CD8-positive, alpha-beta T cell (primary cell): ENCODE measurements at regions of chr9 and their contacts with region 1.

Region 1: DNA sequence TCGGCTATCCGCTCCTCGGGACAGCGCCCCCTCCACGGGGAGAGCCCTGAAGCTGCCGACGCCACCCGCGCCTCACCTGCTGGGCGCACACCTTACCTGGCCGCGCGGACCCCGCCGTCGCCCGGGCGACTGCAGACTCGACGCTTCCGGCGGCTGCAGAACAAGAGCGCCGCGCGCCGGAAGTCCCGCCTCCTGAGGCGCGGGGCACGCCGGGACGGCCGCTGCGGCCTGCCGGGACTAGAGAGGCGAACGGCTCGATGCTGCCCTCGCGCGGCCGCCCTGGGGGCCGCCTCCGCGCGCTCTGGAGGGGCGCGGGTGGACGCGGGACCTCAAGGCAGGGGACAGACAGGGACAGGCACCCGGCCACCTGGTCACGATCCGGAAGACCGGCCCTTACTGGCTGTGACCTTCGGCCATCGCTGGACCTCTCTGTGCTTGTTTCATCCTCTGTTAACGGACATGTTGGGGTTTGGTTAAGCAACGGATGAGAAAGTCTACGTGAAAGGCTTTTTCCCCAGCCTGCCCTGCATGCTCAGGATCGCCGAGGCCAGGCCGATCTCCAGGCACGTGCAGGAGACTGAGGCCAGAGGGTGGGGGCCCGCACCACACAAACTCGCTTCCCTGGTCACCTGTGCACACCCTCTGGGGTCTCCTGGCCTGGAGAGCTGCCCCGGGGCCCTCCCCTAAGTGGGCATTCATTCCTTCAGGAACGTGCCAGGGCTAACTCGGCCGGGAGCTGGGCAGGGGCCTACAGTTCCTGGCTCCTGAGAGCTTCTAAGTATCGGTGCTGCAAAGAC is at the start of gene SNAPC4:
- DNase-seq: peak; percentile 69 to 94 (median 86)
- ATAC-seq: peak; percentile 70
- H3K4me3 ChIP-seq: peak within 1 kb of the TSS; percentile 60 to 66
- H3K4me3 Mint-ChIP-seq: peak within 1 kb of the TSS; percentile 85
- H3K27ac ChIP-seq: peak within 1 kb of the TSS in 1 of 2 experiments; percentile 47
- H3K27ac Mint-ChIP-seq: peak within 1 kb of the TSS; percentile 67
- H3K4me1 ChIP-seq: peaks cover 49% of the 10 kb centered on the region
- H3K4me1 Mint-ChIP-seq: peaks cover 40% of the 10 kb centered on the region
- H3K27me3 ChIP-seq: no peaks in the 10 kb centered on the region
- H3K27me3 Mint-ChIP-seq: no peaks in the 10 kb centered on the region
- CTCF ChIP-seq: peak; percentile 93
- total RNA-seq, gene SNAPC4: 6.7 TPM

Region 2: GRCh38 chr9:136312436-136312835 is 87.8 kb before region 1 on chr9:
- CTCF ChIA-PET with region 1: no interaction called
- POLR2A ChIA-PET with region 1: no interaction called
- intact Hi-C with region 1: loop called in 1 of 2 experiments (anchors 1 kb)
- DNase-seq: peak in 8 of 9 experiments; percentile 7 to 65 (median 40)
- ATAC-seq: peak; percentile 50
- H3K4me3 ChIP-seq: no peak overlapping the region
- H3K4me3 Mint-ChIP-seq: no peak overlapping the region
- H3K27ac ChIP-seq: no peak overlapping the region
- H3K27ac Mint-ChIP-seq: no peak overlapping the region
- H3K4me1 ChIP-seq: no peaks in the 10 kb centered on the region
- H3K4me1 Mint-ChIP-seq: peaks cover 4% of the 10 kb centered on the region
- H3K27me3 ChIP-seq: peaks cover 7 to 31% of the 10 kb centered on the region in 2 experiments
- H3K27me3 Mint-ChIP-seq: no peaks in the 10 kb centered on the region
- CTCF ChIP-seq: peak; percentile 40

Region 3: DNA sequence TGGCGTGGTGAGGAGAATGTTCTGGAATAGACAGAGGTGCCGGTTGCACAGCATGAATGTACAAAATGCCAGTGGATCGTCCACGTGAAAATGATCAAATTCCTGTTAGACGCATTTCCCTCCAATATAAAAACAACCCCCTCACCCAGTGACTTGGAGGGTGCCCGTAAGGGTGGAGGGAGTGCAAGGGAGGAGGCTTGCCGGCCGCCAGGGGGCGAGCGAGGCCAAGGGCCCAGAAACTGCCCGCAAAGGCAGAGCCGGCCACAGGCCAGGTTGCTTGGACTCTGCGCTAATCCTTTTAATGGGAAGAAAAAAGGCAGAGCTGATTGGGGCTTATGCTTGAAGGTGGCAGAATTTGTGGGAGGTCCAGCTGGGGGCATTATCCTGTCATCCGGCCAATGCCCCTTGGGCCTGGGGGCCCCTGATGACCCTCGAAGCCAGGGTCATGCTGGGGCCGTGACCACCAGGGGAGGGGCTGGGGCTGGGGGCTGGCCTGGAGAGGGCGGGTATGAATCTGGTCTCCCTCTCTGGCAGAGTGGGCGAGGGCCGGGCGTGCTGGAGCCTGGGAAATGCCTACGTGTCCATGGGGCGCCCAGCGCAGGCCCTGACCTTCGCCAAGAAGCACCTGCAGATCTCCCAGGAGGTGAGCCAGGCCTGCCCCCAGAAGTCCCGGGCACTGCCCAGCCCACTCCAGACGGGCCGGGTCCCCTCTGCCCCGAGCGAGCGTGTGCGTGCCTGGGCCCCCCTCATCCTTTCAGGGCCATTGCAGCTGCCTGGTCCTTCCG is 60.9 kb before region 1 on chr9:
- CTCF ChIA-PET with region 1: interaction called, 3 read pairs
- POLR2A ChIA-PET with region 1: no interaction called
- intact Hi-C with region 1: loop called in 1 of 2 experiments (anchors 2 kb)
- DNase-seq: peak in 5 of 9 experiments; percentile 28 to 61 (median 49)
- ATAC-seq: no peak
- H3K4me3 ChIP-seq: no peak overlapping the region
- H3K4me3 Mint-ChIP-seq: no peak overlapping the region
- H3K27ac ChIP-seq: no peak overlapping the region
- H3K27ac Mint-ChIP-seq: no peak overlapping the region
- H3K4me1 ChIP-seq: no peaks in the 10 kb centered on the region
- H3K4me1 Mint-ChIP-seq: no peaks in the 10 kb centered on the region
- H3K27me3 ChIP-seq: no peaks in the 10 kb centered on the region
- H3K27me3 Mint-ChIP-seq: no peaks in the 10 kb centered on the region
- CTCF ChIP-seq: peak; percentile 33

Region 4: GRCh38 chr9:136410500-136411287 is 10.5 kb after region 1 on chr9 and contains the starts of genes ENTR1 and PMPCA:
- CTCF ChIA-PET with region 1: interaction called, 5 read pairs
- POLR2A ChIA-PET with region 1: interaction called, 8 read pairs
- intact Hi-C with region 1: loop called (anchors 1 kb)
- DNase-seq: peak; percentile 88 to 97 (median 96)
- ATAC-seq: peak; percentile 85
- H3K4me3 ChIP-seq: peak within 1 kb of the TSS; percentile 79 to 99
- H3K4me3 Mint-ChIP-seq: peak within 1 kb of the TSS; percentile 89
- H3K27ac ChIP-seq: peak within 1 kb of the TSS; percentile 88 to 96
- H3K27ac Mint-ChIP-seq: peak within 1 kb of the TSS; percentile 90
- H3K4me1 ChIP-seq: peaks cover 35% of the 10 kb centered on the region
- H3K4me1 Mint-ChIP-seq: peaks cover 40% of the 10 kb centered on the region
- H3K27me3 ChIP-seq: no peaks in the 10 kb centered on the region
- H3K27me3 Mint-ChIP-seq: no peaks in the 10 kb centered on the region
- CTCF ChIP-seq: no peak
- total RNA-seq, gene ENTR1: 33.0 to 34.4 TPM
- total RNA-seq, gene PMPCA: 107 to 111 TPM

Region 5: GRCh38 chr9:136439550-136440408 is 39.5 kb after region 1 on chr9 and contains the start of gene INPP5E:
- CTCF ChIA-PET with region 1: interaction called, 5 read pairs
- POLR2A ChIA-PET with region 1: no interaction called
- intact Hi-C with region 1: loop called (anchors 1 kb)
- DNase-seq: peak; percentile 72 to 94 (median 82)
- ATAC-seq: peak; percentile 82
- H3K4me3 ChIP-seq: peak within 1 kb of the TSS; percentile 56 to 68
- H3K4me3 Mint-ChIP-seq: peak within 1 kb of the TSS; percentile 83
- H3K27ac ChIP-seq: peak within 1 kb of the TSS; percentile 25 to 42
- H3K27ac Mint-ChIP-seq: peak within 1 kb of the TSS; percentile 37
- H3K4me1 ChIP-seq: peaks cover 27% of the 10 kb centered on the region
- H3K4me1 Mint-ChIP-seq: peaks cover 26% of the 10 kb centered on the region
- H3K27me3 ChIP-seq: no peaks in the 10 kb centered on the region
- H3K27me3 Mint-ChIP-seq: no peaks in the 10 kb centered on the region
- CTCF ChIP-seq: peak; percentile 60
- total RNA-seq, gene INPP5E: 11.4 to 12.7 TPM